Colonic mucosa (tissue), 4 donors: ENCODE measurements at regions of chrX and their contacts with region 1.

Region 1: DNA sequence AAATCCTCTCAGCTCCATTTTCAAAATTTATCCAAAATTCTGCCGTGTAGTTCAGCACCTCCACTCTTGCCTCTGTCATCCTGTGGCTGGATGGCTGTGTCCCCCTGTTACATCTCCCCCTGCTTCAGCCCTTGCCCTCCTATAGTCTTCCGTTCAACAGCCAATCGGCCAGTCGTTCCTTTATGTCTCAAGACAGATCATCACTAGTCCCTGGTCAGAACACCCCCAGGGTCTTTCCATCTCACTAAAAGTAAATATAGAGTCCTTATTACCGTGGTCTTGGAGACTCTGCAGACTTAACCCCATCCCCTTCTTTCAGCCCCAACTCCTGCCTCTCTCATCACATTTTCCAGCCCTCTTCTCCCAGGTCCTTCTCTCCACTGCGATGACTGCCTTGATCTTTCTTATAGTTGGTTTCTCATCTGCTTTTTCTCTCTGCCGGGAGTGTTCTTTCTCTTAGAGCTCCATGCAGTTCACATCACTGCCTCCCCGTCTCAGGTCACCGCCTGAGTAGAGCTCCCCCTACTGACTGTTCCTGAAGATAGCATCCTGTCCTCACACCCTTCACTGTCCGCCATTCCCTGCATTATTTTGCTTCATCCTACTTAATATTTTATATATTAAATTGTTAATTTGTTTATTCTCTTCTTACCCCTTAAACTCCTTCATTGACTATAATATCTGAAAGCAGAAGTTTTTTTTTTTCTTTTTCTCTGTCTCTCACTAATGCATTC is 736.9 kb upstream of the MAGEB2 start:
- DNase-seq: peak; percentile 29
- H3K4me3 ChIP-seq: no peak overlapping the region
- H3K27ac ChIP-seq: no peak overlapping the region
- H3K4me1 ChIP-seq: no peaks in the 10 kb centered on the region
- H3K27me3 ChIP-seq: no peaks in the 10 kb centered on the region
- CTCF ChIP-seq: peak; percentile 63

Region 2: GRCh38 chrX:29419774-29420553 is 58.5 kb before region 1 on chrX:
- intact Hi-C with region 1: loop called (anchors 10 kb)
- DNase-seq: no peak
- H3K4me3 ChIP-seq: no peak overlapping the region
- H3K27ac ChIP-seq: no peak overlapping the region
- H3K4me1 ChIP-seq: no peaks in the 10 kb centered on the region
- H3K27me3 ChIP-seq: no peaks in the 10 kb centered on the region
- CTCF ChIP-seq: no peak